Activated CD4-positive, alpha-beta memory T cell treated with anti-CD3 and anti-CD28 coated beads for 36 hours (primary cell): ENCODE measurements at regions of chr15 and their contacts with region 1.

Region 1: DNA sequence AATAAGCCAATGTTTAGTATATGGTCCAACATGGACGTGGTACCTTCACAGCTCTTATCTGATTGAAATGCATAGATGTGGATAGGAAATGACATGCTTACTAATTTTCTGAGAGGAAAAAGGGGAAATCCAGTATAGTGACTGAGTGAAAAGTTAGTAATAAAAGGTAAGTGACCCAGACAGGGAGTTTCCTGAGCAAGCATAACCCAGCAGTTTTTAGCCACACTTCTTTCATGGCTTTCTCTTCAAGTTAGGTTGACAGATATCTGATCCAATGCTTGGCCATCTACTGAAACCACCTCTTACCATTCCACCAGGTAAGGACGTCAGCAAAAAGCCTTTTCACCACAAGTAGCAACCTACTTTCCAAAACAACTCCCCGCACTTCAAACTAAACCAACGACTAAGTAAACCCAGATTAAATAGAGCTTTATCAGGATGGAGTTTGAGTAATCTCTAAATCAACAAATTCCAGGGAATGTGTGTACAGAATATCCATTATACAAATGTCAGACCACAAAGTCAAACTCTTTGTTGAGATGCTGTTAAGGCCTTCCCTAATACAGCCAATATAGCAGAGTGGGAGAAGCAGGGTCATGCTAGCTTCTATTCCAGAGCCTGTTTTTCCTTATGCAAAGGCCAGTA is 329.7 kb downstream of the RORA start:
- DNase-seq: peak; percentile 48
- H3K4me3 Mint-ChIP-seq: no peak overlapping the region
- H3K27ac Mint-ChIP-seq: peak overlapping the region; percentile 57
- H3K4me1 Mint-ChIP-seq: peaks cover 64% of the 10 kb centered on the region
- H3K27me3 Mint-ChIP-seq: peaks cover 4% of the 10 kb centered on the region

Region 2: GRCh38 chr15:60649845-60650548 is 249.4 kb before region 1 on chr15:
- CTCF ChIA-PET with region 1: interaction called, 7 read pairs
- POLR2A ChIA-PET with region 1: interaction called, 4 read pairs
- intact Hi-C with region 1: loop called (anchors 2 kb)
- DNase-seq: peak; percentile 68
- H3K4me3 Mint-ChIP-seq: peak overlapping the region; percentile 54
- H3K27ac Mint-ChIP-seq: peak overlapping the region; percentile 87
- H3K4me1 Mint-ChIP-seq: peaks cover 58% of the 10 kb centered on the region
- H3K27me3 Mint-ChIP-seq: no peaks in the 10 kb centered on the region

Region 3: DNA sequence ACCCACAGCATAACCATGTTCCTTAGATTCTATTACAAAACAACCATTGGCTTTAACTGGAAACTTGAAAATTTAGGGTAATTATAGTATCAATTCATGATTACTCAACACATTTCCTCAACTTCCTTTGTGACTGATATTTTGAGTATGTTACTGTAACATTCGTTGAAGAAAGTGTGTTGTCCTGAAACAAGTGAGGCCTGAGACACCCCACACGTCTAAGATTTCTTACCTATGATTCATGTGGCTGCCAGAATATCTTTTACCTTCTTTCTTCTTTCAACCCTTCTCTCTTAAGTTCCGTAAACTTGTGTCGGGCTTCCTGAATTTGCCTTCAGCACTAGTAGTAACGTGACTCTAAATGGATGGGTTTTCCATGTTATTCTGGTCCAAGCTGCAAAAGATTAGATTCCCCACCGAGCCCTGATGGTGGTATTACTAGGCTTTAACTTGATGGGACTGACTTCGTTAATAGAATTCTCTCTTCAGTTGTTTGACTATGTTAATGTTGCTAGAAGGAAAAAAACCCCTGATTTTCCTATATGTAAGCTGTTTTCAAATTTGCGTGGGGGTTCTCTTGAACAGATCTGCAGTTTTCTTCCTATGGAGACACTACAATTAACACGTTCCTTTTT is 124.5 kb before region 1 on chr15:
- CTCF ChIA-PET with region 1: no interaction called
- POLR2A ChIA-PET with region 1: no interaction called
- intact Hi-C with region 1: loop called (anchors 1 kb)
- DNase-seq: peak; percentile 37
- H3K4me3 Mint-ChIP-seq: peak overlapping the region; percentile 11
- H3K27ac Mint-ChIP-seq: peak overlapping the region; percentile 86
- H3K4me1 Mint-ChIP-seq: peaks cover 71% of the 10 kb centered on the region
- H3K27me3 Mint-ChIP-seq: no peaks in the 10 kb centered on the region

Region 4: DNA sequence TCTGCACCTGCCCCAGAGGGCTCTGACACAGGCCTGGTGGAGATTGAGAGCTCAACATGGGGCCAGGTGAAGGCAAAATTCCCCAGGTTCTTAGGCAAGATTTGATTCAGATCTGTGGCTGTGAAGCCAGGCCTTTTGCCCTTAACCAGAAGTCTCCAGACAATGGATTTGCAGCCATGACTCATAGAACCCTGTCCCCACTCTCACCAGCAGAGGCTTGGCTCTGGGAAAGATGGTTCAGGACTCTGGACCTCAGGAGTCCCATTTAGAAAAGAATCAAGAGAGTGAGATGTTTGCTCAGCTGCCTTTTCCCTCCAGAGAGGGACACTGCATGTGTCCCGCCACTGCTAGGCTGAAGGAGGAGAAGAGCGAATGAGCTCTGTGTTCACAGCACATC is 59.1 kb before region 1 on chr15:
- CTCF ChIA-PET with region 1: interaction called, 7 read pairs
- POLR2A ChIA-PET with region 1: interaction called, 8 read pairs
- intact Hi-C with region 1: loop called (anchors 1 kb)
- DNase-seq: peak; percentile 36
- H3K4me3 Mint-ChIP-seq: peak overlapping the region; percentile 68
- H3K27ac Mint-ChIP-seq: peak overlapping the region; percentile 74
- H3K4me1 Mint-ChIP-seq: peaks cover 74% of the 10 kb centered on the region
- H3K27me3 Mint-ChIP-seq: peaks cover 3% of the 10 kb centered on the region

Region 5: GRCh38 chr15:60932051-60932915 is 32.8 kb after region 1 on chr15:
- CTCF ChIA-PET with region 1: interaction called, 10 read pairs
- POLR2A ChIA-PET with region 1: interaction called, 4 read pairs
- intact Hi-C with region 1: no loop called
- DNase-seq: peak; percentile 86
- H3K4me3 Mint-ChIP-seq: no peak overlapping the region
- H3K27ac Mint-ChIP-seq: no peak overlapping the region
- H3K4me1 Mint-ChIP-seq: peaks cover 15% of the 10 kb centered on the region
- H3K27me3 Mint-ChIP-seq: peaks cover 7% of the 10 kb centered on the region

Region 6: GRCh38 chr15:60964527-60964926 is 65.1 kb after region 1 on chr15:
- CTCF ChIA-PET with region 1: no interaction called
- POLR2A ChIA-PET with region 1: no interaction called
- intact Hi-C with region 1: no loop called
- DNase-seq: no peak
- H3K4me3 Mint-ChIP-seq: no peak overlapping the region
- H3K27ac Mint-ChIP-seq: no peak overlapping the region
- H3K4me1 Mint-ChIP-seq: no peaks in the 10 kb centered on the region
- H3K27me3 Mint-ChIP-seq: peaks cover 2% of the 10 kb centered on the region

Region 7: DNA sequence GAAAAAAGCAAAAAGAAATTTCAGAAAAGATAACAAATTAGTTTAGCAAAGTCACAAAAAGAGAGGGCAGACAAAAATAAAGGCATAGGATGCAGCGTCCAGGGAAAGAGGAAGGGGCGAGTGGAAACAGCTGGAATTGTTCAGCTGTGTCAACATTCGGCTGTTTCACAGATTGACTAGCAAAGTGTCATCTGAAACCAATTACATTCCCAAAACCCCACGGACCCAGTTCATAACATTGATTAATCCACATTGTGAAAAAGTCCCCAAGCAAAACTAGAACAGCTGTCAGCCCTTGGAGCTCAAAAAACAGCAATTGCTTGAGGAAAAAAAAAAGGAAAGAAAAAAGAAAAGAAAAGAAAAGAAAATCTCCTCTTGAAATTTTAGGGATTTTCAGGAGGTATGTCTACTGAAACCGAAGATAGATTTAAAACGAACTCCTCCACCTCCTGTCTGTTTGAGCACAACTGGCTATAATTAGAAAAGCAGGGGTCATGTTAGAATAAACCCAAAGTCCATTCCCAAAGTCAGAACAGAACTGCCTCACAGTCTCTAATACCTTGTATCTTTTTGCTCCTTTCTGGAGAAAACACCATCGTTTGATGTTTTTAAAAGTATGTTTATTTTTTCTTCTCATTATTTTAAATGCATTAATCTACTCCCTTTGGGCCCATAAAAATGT is 170.1 kb after region 1 on chr15:
- CTCF ChIA-PET with region 1: no interaction called
- POLR2A ChIA-PET with region 1: no interaction called
- intact Hi-C with region 1: no loop called
- DNase-seq: no peak
- H3K4me3 Mint-ChIP-seq: no peak overlapping the region
- H3K27ac Mint-ChIP-seq: no peak overlapping the region
- H3K4me1 Mint-ChIP-seq: no peaks in the 10 kb centered on the region
- H3K27me3 Mint-ChIP-seq: peaks cover 20% of the 10 kb centered on the region